Activated CD4-positive, alpha-beta T cell treated with anti-CD3 and anti-CD28 coated beads for 36 hours (primary cell): ENCODE measurements at regions of chr7 and their contacts with region 1.

Region 1: DNA sequence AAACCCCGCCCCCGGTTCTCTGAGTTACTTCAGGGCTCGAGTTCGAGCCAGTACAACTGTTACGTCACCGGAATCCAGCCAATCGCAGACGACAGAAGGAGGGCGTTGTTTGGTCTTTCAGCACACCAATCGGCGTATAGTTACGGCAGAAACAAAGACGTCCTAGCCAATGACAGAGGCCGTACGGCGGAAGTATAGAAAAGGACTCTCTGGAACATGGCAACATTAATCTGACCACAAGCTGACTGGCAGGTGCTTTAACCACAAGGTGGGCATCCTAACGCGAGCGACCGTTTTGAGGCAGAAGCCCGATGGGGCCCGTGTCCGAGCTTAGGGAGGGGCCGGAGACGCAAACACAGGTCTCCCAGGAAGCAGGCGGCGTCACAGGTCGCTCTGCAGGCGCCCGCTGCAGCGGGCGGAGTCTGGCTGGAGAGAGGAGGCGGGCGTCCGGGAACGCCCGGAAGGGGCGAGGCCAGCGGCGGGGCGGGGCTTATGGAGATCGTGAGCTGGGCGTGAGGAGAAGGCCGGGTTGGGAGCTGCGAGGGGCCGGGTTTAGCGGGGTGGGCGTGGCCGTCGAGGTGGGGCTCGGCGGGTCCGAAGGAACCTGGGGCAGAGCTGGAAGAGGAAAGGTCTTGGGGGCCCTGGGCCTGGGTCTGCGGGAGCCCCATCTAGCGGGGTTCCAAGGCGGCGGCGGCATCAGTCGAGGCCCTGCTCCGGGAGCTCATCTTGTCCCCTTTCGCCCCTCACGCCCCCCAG is at the start of gene MOSPD3:
- DNase-seq: peak; percentile 99
- ATAC-seq: peak; percentile 94
- H3K4me3 Mint-ChIP-seq: peak within 1 kb of the TSS; percentile 83
- H3K27ac Mint-ChIP-seq: peak within 1 kb of the TSS; percentile 100
- H3K4me1 Mint-ChIP-seq: peaks cover 17% of the 10 kb centered on the region
- H3K27me3 Mint-ChIP-seq: no peaks in the 10 kb centered on the region
- total RNA-seq, gene MOSPD3: 14.4 to 19.9 TPM

Region 2: DNA sequence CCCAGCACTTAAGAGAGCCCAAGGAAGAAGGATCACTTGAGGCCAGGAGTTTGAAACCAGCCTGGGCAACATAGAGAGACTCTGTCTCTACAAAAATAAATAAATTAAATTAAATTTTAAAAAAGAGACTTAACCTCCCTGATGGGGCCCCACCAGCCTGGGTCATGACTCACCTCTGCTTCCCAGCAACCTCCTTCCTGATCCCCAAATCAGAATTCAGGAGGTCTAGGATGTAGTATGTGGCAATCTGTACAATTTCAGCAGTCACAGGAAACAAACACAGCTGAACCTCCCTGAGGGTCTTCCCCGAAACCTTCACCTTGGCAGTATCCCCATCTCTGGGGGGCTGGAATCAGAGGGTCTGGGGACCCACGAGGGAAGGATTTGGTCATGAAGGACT is 166.1 kb before region 1 on chr7:
- CTCF ChIA-PET with region 1: no interaction called
- POLR2A ChIA-PET with region 1: no interaction called
- intact Hi-C with region 1: loop called in 1 of 2 experiments (anchors 1 kb)
- DNase-seq: no peak
- ATAC-seq: no peak
- H3K4me3 Mint-ChIP-seq: no peak overlapping the region
- H3K27ac Mint-ChIP-seq: no peak overlapping the region
- H3K4me1 Mint-ChIP-seq: peaks cover 15% of the 10 kb centered on the region
- H3K27me3 Mint-ChIP-seq: no peaks in the 10 kb centered on the region

Region 3: DNA sequence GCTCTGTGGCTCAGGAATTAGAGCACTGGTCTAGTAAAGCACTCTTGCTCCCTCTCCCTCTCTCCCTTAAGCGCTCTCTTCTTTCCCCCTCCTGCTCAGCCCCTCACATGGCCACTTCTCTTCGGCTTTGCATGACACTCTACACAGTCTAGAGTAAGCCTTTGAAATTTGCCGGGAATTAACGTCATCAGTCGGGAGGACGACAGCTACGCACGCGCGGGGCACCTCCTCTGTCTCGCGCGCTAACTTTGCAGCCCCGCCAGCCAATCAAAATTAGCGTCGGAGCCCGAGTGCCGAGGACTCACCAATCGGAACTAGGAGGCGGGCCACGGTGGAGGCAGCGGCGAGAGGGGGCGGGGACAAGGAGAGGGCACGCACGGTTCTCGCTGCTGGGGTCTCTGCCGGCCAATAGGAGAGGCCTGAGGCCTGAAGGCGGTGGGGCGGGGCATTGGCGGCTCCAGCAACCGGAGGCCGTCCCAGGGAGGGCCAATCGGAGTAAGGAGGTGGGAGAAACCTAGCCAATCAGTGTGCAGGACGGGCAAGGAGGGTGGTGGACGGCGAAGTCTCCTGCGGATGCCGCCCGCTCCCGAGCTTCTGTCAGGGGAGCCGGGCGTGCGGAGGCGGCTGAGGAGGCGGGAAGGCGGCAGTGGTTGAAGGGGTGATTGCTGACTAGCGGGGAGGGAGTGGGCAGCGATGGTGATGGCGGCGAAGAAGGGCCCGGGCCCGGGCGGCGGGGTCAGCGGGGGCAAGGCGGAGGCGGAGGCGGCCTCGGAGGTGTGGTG is 73.3 kb before region 1 on chr7 and contains the start of gene AGFG2:
- CTCF ChIA-PET with region 1: no interaction called
- POLR2A ChIA-PET with region 1: no interaction called
- intact Hi-C with region 1: loop called in 1 of 2 experiments (anchors 1 kb)
- DNase-seq: peak; percentile 100
- ATAC-seq: peak; percentile 92
- H3K4me3 Mint-ChIP-seq: peak within 1 kb of the TSS; percentile 98
- H3K27ac Mint-ChIP-seq: peak within 1 kb of the TSS; percentile 95
- H3K4me1 Mint-ChIP-seq: peaks cover 42% of the 10 kb centered on the region
- H3K27me3 Mint-ChIP-seq: no peaks in the 10 kb centered on the region
- total RNA-seq, gene AGFG2: 49.3 to 49.4 TPM

Region 4: GRCh38 chr7:100626530-100627237 is 14.5 kb after region 1 on chr7:
- CTCF ChIA-PET with region 1: interaction called, 8 read pairs
- POLR2A ChIA-PET with region 1: interaction called, 5 read pairs
- intact Hi-C with region 1: loop called (anchors 1 kb)
- DNase-seq: peak; percentile 96
- ATAC-seq: peak; percentile 99
- H3K4me3 Mint-ChIP-seq: peak overlapping the region; percentile 71
- H3K27ac Mint-ChIP-seq: peak overlapping the region; percentile 47
- H3K4me1 Mint-ChIP-seq: peaks cover 13% of the 10 kb centered on the region
- H3K27me3 Mint-ChIP-seq: no peaks in the 10 kb centered on the region

Region 5: GRCh38 chr7:100691676-100692577 is 79.8 kb after region 1 on chr7:
- CTCF ChIA-PET with region 1: interaction called, 11 read pairs
- POLR2A ChIA-PET with region 1: interaction called, 3 read pairs
- intact Hi-C with region 1: loop called (anchors 1 to 5 kb)
- DNase-seq: peak; percentile 92
- ATAC-seq: peak; percentile 78
- H3K4me3 Mint-ChIP-seq: peak overlapping the region; percentile 89
- H3K27ac Mint-ChIP-seq: peak overlapping the region; percentile 88
- H3K4me1 Mint-ChIP-seq: peaks cover 48% of the 10 kb centered on the region
- H3K27me3 Mint-ChIP-seq: no peaks in the 10 kb centered on the region

Region 6: DNA sequence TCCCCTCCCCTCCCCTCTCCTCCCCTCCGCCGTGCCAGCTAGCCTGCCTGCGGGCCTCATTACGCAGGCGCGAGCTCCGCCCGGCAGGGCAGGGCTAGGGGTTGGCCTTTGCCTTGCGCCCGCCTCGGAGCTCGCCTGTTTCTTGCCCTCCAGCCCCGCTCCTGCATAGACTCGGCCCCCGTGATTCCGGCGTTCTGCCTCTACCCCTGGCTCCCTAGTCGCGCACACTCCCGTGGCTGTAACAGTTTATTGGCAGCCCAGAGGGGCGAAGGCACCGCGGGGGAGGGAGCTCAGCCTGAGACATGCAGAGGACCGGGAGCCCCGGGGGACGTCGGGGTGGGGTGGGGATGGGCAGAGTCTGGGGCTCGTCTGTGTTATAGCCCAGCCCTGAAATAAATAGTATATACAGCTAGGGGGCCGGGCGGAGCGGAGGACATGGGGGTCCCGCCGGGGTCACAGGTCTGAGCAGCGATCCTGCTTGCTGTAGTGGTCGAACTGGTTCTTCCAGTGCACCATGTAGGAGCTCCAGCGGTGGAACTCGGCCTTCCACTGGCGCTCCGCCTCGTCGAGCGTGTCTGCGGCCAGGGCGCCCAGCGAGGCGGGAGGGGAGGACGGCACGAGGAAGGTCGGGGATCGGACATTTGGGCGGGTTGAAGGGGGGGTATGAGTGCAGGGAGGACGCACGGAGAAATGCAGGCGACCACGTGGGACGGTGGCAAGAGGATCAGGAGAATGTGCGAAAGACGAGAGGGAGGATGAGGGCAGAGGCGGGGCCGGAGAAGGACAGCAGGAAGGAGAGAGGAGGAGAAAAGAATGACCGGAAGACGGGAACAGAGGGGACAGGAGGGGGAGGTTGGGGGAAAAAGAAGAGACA is 277.8 kb after region 1 on chr7:
- CTCF ChIA-PET with region 1: no interaction called
- POLR2A ChIA-PET with region 1: no interaction called
- intact Hi-C with region 1: loop called in 1 of 2 experiments (anchors 1 kb)
- DNase-seq: peak; percentile 96
- ATAC-seq: peak; percentile 95
- H3K4me3 Mint-ChIP-seq: peak overlapping the region; percentile 77
- H3K27ac Mint-ChIP-seq: no peak overlapping the region
- H3K4me1 Mint-ChIP-seq: peaks cover 38% of the 10 kb centered on the region
- H3K27me3 Mint-ChIP-seq: peaks cover 14% of the 10 kb centered on the region

Region 7: GRCh38 chr7:101244375-101245146 is 632.4 kb after region 1 on chr7 and contains the start of gene FIS1:
- CTCF ChIA-PET with region 1: no interaction called
- POLR2A ChIA-PET with region 1: no interaction called
- intact Hi-C with region 1: no loop called
- DNase-seq: peak; percentile 97
- ATAC-seq: peak; percentile 96
- H3K4me3 Mint-ChIP-seq: peak within 1 kb of the TSS; percentile 97
- H3K27ac Mint-ChIP-seq: peak within 1 kb of the TSS; percentile 97
- H3K4me1 Mint-ChIP-seq: peaks cover 25% of the 10 kb centered on the region
- H3K27me3 Mint-ChIP-seq: no peaks in the 10 kb centered on the region
- total RNA-seq, gene FIS1: 70.5 to 92.6 TPM